K562 (cell line): ENCODE measurements at regions of chr10 and their contacts with region 1.

Region 1: GRCh38 chr10:4813023-4813422 is 13.0 kb upstream of the AKR1E2 start:
- DNase-seq: peak in 3 of 4 experiments; percentile 17 to 63 (median 49)
- ATAC-seq: peak; percentile 73
- H3K4me3 ChIP-seq: no peak overlapping the region
- H3K27ac ChIP-seq: no peak overlapping the region; the same call in 2 of the 3 replicates
- H3K4me1 ChIP-seq: peaks cover 0 to 8% of the 10 kb centered on the region in 2 experiments; a peak in 2 of 5 replicates
- H3K27me3 ChIP-seq: no peaks in the 10 kb centered on the region
- CTCF ChIP-seq: no peak
- EP300 ChIP-seq: no peak
- POLR2A ChIP-seq: no peak
- RAD21 ChIP-seq: no peak

Region 2: DNA sequence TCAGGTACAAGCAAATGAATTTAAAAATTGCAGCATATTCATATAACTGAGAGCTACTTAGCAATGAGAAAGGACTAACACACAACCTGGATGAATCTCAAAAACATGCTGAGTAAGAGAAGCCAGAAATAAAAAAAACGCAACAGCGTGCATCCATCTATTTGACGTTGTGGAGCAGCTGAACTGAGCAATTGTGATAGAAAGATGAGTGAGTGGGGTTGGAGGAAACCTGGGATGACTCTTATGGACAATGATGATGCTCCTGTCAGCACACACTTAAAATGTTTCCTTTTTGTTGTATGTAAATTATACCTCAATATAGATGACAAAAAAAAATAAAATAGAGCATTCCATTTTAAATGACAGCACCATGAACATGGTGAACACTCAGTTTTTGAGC is 23.0 kb before region 1 on chr10:
- CTCF ChIA-PET with region 1: no interaction called
- POLR2A ChIA-PET with region 1: no interaction called
- in situ Hi-C with region 1: no loop called
- intact Hi-C with region 1: no loop called
- DNase-seq: no peak
- ATAC-seq: no peak
- H3K4me3 ChIP-seq: no peak overlapping the region
- H3K27ac ChIP-seq: no peak overlapping the region
- H3K4me1 ChIP-seq: no peaks in the 10 kb centered on the region
- H3K27me3 ChIP-seq: peaks cover 5 to 16% of the 10 kb centered on the region in 2 experiments; a peak in 3 of 5 replicates
- CTCF ChIP-seq: no peak
- EP300 ChIP-seq: no peak
- POLR2A ChIP-seq: no peak
- RAD21 ChIP-seq: no peak

Region 3: GRCh38 chr10:4801368-4801767 is 11.7 kb before region 1 on chr10:
- CTCF ChIA-PET with region 1: no interaction called
- POLR2A ChIA-PET with region 1: no interaction called
- in situ Hi-C with region 1: no loop called
- intact Hi-C with region 1: no loop called
- DNase-seq: no peak
- ATAC-seq: no peak
- H3K4me3 ChIP-seq: no peak overlapping the region
- H3K27ac ChIP-seq: no peak overlapping the region
- H3K4me1 ChIP-seq: no peaks in the 10 kb centered on the region
- H3K27me3 ChIP-seq: peaks cover 18 to 29% of the 10 kb centered on the region in 2 experiments
- CTCF ChIP-seq: no peak
- EP300 ChIP-seq: no peak
- POLR2A ChIP-seq: no peak
- RAD21 ChIP-seq: no peak

Region 4: DNA sequence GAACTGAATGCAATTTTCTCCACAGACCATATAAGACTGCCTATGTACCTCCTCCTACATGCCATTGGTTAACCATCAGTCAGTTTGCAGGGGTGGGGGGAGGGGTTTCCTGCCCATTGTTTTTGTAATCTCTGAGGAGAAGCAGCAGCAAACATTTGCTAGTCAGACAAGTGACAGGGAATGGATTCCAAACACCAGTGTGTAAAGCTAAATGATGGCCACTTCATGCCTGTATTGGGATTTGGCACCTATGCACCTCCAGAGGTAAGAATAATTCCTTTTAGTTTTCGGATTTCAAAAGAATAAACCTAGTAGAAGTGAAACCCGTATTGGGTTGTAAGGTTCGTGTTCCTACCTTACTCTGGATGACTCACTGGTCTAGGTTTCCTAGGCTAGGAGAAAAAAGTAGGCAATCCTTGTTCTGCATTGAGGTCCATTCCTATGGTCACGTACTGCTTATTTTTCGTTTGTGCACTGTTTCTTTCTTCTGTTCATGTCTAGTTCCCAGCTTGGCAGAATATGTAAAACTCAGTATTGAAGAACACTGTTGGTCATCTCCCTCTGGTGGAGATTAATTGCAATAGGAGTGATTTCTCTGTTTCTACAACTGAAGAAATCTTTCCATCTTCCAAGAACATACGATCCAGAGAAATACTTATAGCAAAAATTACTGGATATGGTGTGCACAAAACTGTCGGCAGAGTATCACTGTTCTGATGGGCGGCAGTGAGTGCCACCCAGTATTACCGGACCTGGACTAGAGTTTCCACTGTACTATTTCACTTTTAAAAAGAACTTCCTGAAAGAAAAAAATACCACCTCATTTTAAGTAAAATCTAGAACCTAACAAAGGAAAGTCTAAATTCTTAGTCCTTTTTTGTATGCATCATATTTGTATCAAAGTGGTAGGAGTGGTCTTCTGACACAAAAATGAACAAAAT is 281.5 kb after region 1 on chr10 and contains the start of gene AKR1C3:
- CTCF ChIA-PET with region 1: interaction called, 4 read pairs
- POLR2A ChIA-PET with region 1: no interaction called
- in situ Hi-C with region 1: no loop called
- intact Hi-C with region 1: loop called (anchors 10 kb)
- DNase-seq: peak; percentile 27 to 62 (median 40)
- ATAC-seq: peak; percentile 89
- H3K4me3 ChIP-seq: peak within 1 kb of the TSS; percentile 0; the same call in 1 of the 2 replicates
- H3K27ac ChIP-seq: peak within 1 kb of the TSS; percentile 42; the same call in 2 of the 3 replicates
- H3K4me1 ChIP-seq: no peaks in the 10 kb centered on the region; a peak in 1 of 5 replicates
- H3K27me3 ChIP-seq: no peaks in the 10 kb centered on the region
- CTCF ChIP-seq: peak; percentile 50 to 65 (median 57); a peak in 5 of 6 replicates
- EP300 ChIP-seq: no peak
- POLR2A ChIP-seq: peak; percentile 43; the same call in 1 of the 2 replicates
- RAD21 ChIP-seq: peak; percentile 42 to 79; a peak in 3 of 4 replicates
- polyA plus RNA-seq, gene AKR1C3: 18.8 to 20.4 TPM

Region 5: DNA sequence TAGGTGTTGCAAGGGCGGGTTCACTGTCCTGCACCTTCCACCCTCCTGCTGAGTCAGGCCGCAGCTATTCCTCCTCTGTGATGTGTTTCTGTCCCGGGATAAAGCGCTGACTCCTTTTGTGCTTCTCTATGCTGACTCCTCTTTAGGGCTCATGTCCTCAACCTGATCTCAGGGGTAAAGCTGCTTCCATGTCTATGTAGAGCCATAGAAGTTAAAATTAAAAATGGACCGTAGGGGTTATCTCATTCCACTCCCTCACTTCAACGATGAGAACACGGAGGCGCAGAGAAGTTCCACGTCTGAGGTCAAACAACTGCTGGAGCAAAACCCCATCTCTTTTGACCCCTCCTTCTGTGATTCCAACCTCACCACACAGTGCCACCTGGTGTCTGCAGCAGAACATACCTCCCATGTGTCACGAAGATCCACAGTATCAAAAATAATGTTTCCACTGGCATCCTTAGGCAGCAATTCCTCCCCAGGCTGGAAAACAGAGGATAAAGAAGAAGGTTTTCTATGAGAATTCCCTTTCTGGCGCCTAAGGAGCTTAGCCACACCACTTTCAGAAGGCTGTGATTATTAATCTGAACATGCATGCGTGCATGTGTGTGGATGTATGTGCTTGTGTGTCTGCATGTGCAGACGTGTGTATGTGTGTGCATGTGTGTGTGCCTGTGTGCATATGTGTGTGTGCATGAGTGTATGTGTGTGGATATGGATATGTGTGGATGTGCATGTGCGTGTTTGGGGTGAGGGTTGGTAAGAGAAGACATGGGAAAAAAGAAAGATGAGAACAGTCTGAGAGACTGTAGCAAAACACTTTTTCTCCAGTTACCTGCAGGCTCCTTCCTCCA is 470.5 kb after region 1 on chr10:
- CTCF ChIA-PET with region 1: interaction called, 4 read pairs
- POLR2A ChIA-PET with region 1: no interaction called
- in situ Hi-C with region 1: no loop called
- intact Hi-C with region 1: loop called (anchors 1 kb)
- DNase-seq: peak; percentile 47 to 81 (median 62)
- ATAC-seq: peak; percentile 95
- H3K4me3 ChIP-seq: no peak overlapping the region
- H3K27ac ChIP-seq: peak overlapping the region; percentile 89
- H3K4me1 ChIP-seq: peaks cover 2 to 17% of the 10 kb centered on the region in 2 experiments; a peak in 4 of 5 replicates
- H3K27me3 ChIP-seq: no peaks in the 10 kb centered on the region
- CTCF ChIP-seq: peak; percentile 79 to 83 (median 80)
- EP300 ChIP-seq: no peak
- POLR2A ChIP-seq: no peak
- RAD21 ChIP-seq: peak; percentile 66 to 84

Region 6: DNA sequence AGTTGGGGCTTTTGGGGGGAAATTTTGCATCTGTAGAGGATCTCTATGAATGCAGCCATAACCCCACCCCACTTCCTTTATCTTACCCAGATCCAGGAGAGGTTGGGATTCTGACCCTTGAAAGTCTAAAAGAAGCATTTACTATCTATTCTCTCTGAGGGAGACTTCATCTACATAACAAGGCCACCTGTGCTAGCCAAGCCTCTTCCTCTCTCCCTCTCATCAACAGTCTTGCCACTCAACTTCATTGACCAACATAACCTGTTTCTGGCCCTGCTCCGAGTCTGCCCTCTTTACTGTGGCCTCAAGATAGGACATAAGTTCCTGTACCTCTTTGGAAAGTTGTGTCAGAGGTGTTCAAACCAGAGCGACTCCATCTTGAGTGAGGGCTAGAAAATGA is 572.2 kb after region 1 on chr10:
- CTCF ChIA-PET with region 1: interaction called, 4 read pairs
- POLR2A ChIA-PET with region 1: no interaction called
- in situ Hi-C with region 1: no loop called
- intact Hi-C with region 1: loop called (anchors 1 kb)
- DNase-seq: no peak
- ATAC-seq: no peak
- H3K4me3 ChIP-seq: no peak overlapping the region
- H3K27ac ChIP-seq: no peak overlapping the region
- H3K4me1 ChIP-seq: no peaks in the 10 kb centered on the region; a peak in 2 of 5 replicates
- H3K27me3 ChIP-seq: no peaks in the 10 kb centered on the region
- CTCF ChIP-seq: no peak
- EP300 ChIP-seq: no peak
- POLR2A ChIP-seq: no peak
- RAD21 ChIP-seq: no peak